ENCODE measurements at regions of chr3 and their contacts with region 1.

Region 1: GRCh38 chr3:146035356-146035755 is 125.6 kb downstream of the PLOD2 start:
- DNase-seq: no peak
- H3K4me3 ChIP-seq: no peak overlapping the region
- H3K27ac ChIP-seq: no peak overlapping the region
- H3K4me1 ChIP-seq: no peaks in the 10 kb centered on the region
- H3K27me3 ChIP-seq: no peaks in the 10 kb centered on the region
- CTCF ChIP-seq: no peak
- POLR2A ChIP-seq: no peak

Region 2: DNA sequence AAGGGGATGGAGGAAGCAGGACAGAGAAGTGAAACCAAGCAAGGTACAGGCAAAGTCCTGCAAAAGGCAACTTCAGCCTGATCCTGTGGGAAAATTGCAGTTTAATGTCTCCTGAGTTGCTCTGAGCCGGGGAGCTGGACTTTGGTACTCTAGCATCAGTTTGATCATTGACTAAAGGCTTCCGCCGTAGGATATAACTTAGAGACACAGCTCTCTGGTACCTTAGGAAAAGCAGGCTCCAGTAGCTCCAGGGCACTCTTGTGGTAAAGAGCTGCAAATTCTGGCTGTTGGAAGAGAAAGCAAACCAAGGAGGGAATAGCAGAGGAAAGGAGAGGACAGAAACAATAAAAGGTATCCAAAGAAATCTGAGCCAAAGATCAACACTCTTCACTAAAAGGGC is 395.5 kb before region 1 on chr3:
- intact Hi-C with region 1: no loop called
- DNase-seq: no peak
- H3K4me3 ChIP-seq: no peak overlapping the region
- H3K27ac ChIP-seq: no peak overlapping the region
- H3K4me1 ChIP-seq: no peaks in the 10 kb centered on the region
- H3K27me3 ChIP-seq: no peaks in the 10 kb centered on the region
- CTCF ChIP-seq: no peak
- POLR2A ChIP-seq: no peak

Region 3: DNA sequence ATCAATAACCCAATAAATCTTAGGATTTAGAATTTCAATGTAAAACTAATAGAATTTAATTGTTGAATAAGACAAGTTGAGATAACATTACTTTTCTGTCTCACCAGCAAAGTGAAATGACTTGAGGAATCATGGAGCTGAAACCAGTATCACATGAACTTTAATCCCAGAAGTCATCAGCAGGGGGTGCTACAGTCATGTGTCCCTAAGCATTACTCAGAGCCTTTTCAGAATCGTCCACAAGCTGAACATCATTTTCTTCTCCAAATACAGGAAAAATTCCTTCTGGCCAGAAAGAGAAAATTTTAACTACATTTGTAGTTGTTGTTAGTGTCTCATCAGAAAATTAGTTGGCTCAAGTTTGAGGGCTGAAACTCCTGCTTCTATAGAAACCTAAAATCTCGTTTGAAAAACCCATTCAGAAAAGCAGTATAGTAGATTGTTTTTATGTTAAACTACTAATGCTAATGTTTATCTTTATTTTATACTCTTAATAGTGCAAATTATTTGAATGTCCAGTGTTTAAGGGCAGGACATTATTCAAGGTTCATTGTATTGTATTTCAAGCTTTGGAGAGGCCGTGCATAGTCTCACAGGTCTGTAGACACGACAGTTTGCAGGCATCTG is 258.5 kb before region 1 on chr3:
- intact Hi-C with region 1: loop called (anchors 10 kb)
- DNase-seq: no peak
- H3K4me3 ChIP-seq: no peak overlapping the region
- H3K27ac ChIP-seq: no peak overlapping the region
- H3K4me1 ChIP-seq: peaks cover 0 to 4% (median 0%) of the 10 kb centered on the region in 3 donors
- H3K27me3 ChIP-seq: no peaks in the 10 kb centered on the region
- CTCF ChIP-seq: peak in 5 of 6 experiments; percentile 53 to 78 (median 61)
- POLR2A ChIP-seq: no peak

Measured in esophagus squamous epithelium (tissue), 5 donors.